Natural killer cell (primary cell): ENCODE measurements at regions of chr5 and their contacts with region 1.

Region 1: DNA sequence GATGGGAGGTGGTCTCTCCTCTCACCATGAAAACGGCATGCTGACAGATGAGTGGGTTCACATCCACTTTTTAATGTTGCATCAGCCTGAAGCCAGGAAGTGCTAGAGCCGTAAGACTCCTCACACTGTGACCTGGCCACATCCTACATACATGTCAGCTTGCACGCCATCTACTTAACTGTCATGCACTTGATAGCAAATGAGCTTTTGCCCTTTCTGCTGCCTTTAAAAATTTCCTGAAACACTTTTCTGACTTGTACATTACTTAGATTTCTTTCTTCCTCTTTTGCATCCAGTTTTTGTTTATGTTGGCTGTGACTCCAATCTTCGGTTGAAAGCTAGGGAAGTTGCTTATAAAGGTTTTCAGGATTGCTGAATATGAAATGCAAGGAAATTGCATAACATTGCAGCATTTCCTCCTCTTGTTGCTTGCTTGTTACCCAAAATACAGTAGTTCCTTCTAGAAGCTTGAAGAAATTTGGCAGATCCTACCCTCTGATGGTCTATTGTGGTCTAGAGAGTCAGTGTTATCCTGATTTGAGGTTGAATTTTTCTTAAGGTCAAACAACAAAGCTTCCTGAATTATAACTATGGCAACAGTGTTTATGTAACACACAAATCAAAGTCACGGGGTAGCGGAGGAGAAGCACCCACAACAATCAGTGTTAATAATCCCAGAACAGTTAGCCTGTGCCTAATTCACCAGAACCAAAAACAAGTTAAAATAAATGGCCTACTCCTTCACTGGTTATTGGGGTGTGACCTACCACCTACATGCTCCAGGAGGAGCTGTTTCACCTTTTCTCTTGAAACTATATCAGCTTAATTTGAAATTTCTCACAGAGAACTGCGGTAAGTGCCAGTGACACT is 232.5 kb downstream of the ARHGAP26 start:
- DNase-seq: peak; percentile 65 to 91
- ATAC-seq: peak; percentile 77 to 90 (median 83)
- H3K4me3 ChIP-seq: no peak overlapping the region
- H3K4me3 Mint-ChIP-seq: peak overlapping the region; percentile 91
- H3K27ac ChIP-seq: peak overlapping the region; percentile 85
- H3K27ac Mint-ChIP-seq: peak overlapping the region; percentile 96 to 100
- H3K4me1 ChIP-seq: peaks cover 74% of the 10 kb centered on the region
- H3K4me1 Mint-ChIP-seq: peaks cover 94% of the 10 kb centered on the region in 2 donors
- H3K27me3 ChIP-seq: no peaks in the 10 kb centered on the region
- H3K27me3 Mint-ChIP-seq: no peaks in the 10 kb centered on the region
- CTCF ChIP-seq: peak; percentile 69

Region 2: GRCh38 chr5:142215915-142216681 is 786.6 kb before region 1 on chr5:
- intact Hi-C with region 1: no loop called
- DNase-seq: no peak
- ATAC-seq: no peak
- H3K4me3 ChIP-seq: no peak overlapping the region
- H3K4me3 Mint-ChIP-seq: no peak overlapping the region
- H3K27ac ChIP-seq: no peak overlapping the region
- H3K27ac Mint-ChIP-seq: no peak overlapping the region
- H3K4me1 ChIP-seq: peaks cover 9% of the 10 kb centered on the region
- H3K4me1 Mint-ChIP-seq: peaks cover 0 to 8% of the 10 kb centered on the region in 2 donors
- H3K27me3 ChIP-seq: no peaks in the 10 kb centered on the region
- H3K27me3 Mint-ChIP-seq: peaks cover 0 to 6% of the 10 kb centered on the region in 2 donors
- CTCF ChIP-seq: no peak

Region 3: DNA sequence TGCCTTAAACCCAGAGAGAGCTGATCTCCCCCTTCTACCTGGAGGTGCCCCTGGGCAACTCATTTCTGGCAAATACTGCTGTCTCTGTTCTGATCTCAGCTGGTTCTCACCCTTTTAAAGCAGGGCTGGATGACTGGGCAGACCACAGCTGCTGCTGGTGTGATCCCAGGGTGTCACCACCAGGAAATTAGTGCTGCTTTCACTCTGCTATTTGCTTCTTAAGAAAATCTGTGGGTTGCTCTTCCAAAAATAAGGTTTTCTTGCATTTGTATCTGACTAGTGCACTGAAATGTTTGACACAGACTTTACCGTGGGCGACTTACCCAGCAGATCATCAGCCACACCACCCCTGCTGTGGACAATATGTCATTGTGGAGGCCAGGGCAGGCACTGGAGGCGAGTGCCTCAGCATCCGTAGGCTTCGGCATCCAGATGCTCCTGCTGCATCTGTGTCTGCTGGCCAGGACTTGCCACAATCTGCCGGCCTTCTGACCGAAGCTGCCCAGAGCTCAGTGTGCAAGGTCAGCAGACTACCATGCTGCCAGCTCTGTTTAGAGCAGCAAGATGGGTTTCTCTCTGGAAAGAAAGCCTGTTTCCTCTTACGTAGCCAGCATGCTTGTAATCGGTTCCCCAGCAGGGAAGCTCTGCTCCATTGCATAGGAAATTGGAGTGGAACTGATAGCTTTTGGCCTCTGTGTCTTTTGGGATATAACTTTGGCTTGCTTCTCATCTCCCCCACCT is 218.9 kb before region 1 on chr5:
- intact Hi-C with region 1: loop called (anchors 5 kb)
- DNase-seq: peak; percentile 55 to 70
- ATAC-seq: peak; percentile 67 to 82 (median 77)
- H3K4me3 ChIP-seq: peak overlapping the region; percentile 14
- H3K4me3 Mint-ChIP-seq: peak overlapping the region; percentile 69
- H3K27ac ChIP-seq: peak overlapping the region; percentile 62
- H3K27ac Mint-ChIP-seq: peak overlapping the region; percentile 91 to 94
- H3K4me1 ChIP-seq: peaks cover 72% of the 10 kb centered on the region
- H3K4me1 Mint-ChIP-seq: peaks cover 94 to 96% of the 10 kb centered on the region in 2 donors
- H3K27me3 ChIP-seq: no peaks in the 10 kb centered on the region
- H3K27me3 Mint-ChIP-seq: no peaks in the 10 kb centered on the region
- CTCF ChIP-seq: no peak

Region 4: DNA sequence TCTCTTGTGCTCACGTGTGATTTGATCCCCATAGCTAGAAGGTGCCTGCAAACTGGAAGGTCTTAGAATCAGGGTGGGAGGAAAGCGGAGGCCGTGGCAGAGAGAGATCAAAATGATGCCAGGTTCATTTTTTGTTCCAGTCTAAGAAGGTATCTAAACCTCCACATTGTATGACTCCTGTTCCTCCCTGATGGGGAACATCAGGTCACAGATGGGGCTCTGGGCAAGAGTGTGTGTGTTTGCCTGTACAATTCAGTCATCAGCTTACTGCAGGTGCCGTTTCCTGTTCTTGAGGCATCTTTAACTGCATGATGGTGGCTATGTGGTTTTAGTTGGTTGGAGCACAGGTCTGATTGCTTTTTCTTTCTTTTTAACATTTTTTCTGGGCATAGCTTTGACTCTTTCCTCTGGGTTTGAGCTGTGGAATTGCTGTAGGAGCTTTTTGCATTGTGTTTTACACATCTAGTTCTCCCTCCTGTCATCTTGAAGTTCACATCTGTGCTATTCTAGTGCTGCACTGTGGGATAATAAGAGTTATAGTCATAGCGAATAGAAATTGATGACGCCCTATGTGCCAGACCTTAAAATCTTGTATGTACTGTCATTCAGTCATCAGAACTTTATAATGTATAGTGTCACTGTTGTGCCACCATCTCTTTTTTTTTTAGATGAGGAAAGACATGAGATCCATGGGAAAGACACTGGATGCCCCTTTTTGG is 201.8 kb before region 1 on chr5:
- intact Hi-C with region 1: no loop called
- DNase-seq: peak; percentile 29 to 78
- ATAC-seq: peak; percentile 60 to 72 (median 61)
- H3K4me3 ChIP-seq: no peak overlapping the region
- H3K4me3 Mint-ChIP-seq: peak overlapping the region; percentile 77
- H3K27ac ChIP-seq: peak overlapping the region; percentile 61
- H3K27ac Mint-ChIP-seq: peak overlapping the region; percentile 83 to 90
- H3K4me1 ChIP-seq: peaks cover 49% of the 10 kb centered on the region
- H3K4me1 Mint-ChIP-seq: peaks cover 77 to 84% of the 10 kb centered on the region in 2 donors
- H3K27me3 ChIP-seq: no peaks in the 10 kb centered on the region
- H3K27me3 Mint-ChIP-seq: no peaks in the 10 kb centered on the region
- CTCF ChIP-seq: no peak

Region 5: DNA sequence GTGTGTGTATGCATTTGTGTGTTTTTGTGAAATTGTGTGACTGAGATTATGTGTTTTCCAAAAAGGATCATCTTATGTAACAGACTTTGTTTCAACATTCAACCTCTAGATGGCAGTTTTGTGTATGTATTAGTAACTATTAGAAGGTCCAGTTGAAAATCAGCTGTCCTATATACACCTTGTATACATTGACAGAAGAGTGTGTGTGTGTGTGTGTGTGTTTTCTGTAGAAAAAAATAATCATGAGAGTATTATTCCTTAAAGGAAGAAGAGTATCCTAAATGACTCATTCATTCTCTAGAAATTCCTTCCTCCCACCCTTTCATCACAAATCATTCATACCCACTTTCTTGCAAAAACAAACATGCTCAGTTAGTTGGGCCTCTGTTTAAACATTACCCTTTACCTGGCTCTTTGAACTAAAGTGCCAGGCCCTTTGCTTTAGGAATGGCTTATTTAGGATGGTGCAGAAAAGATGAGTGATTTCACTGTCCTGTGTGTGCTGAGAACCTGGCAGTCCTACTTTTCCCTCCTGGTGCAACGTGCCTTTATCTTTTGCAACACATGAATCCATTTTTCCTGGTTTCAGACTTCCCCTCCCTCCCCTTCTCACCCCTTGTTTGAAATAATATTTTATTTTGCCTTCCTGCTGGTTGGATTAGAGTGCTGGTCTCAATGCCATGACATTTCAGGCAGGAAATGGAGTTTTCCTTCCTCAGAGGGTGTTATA is 80.3 kb before region 1 on chr5:
- intact Hi-C with region 1: loop called (anchors 1 kb)
- DNase-seq: peak in 1 of 2 donors; percentile 60
- ATAC-seq: peak; percentile 52 to 66 (median 59)
- H3K4me3 ChIP-seq: no peak overlapping the region
- H3K4me3 Mint-ChIP-seq: no peak overlapping the region
- H3K27ac ChIP-seq: peak overlapping the region; percentile 0
- H3K27ac Mint-ChIP-seq: peak overlapping the region; percentile 86 to 98
- H3K4me1 ChIP-seq: peaks cover 28% of the 10 kb centered on the region
- H3K4me1 Mint-ChIP-seq: peaks cover 52 to 53% of the 10 kb centered on the region in 2 donors
- H3K27me3 ChIP-seq: no peaks in the 10 kb centered on the region
- H3K27me3 Mint-ChIP-seq: no peaks in the 10 kb centered on the region
- CTCF ChIP-seq: peak; percentile 49

Region 6: GRCh38 chr5:142977363-142978051 is 25.2 kb before region 1 on chr5:
- intact Hi-C with region 1: loop called (anchors 1 kb)
- DNase-seq: peak; percentile 63 to 87
- ATAC-seq: peak; percentile 83 to 96 (median 93)
- H3K4me3 ChIP-seq: no peak overlapping the region
- H3K4me3 Mint-ChIP-seq: peak overlapping the region; percentile 82
- H3K27ac ChIP-seq: peak overlapping the region; percentile 93
- H3K27ac Mint-ChIP-seq: peak overlapping the region; percentile 89 to 91
- H3K4me1 ChIP-seq: peaks cover 78% of the 10 kb centered on the region
- H3K4me1 Mint-ChIP-seq: peaks cover 97 to 98% of the 10 kb centered on the region in 2 donors
- H3K27me3 ChIP-seq: no peaks in the 10 kb centered on the region
- H3K27me3 Mint-ChIP-seq: no peaks in the 10 kb centered on the region
- CTCF ChIP-seq: no peak

Region 7: DNA sequence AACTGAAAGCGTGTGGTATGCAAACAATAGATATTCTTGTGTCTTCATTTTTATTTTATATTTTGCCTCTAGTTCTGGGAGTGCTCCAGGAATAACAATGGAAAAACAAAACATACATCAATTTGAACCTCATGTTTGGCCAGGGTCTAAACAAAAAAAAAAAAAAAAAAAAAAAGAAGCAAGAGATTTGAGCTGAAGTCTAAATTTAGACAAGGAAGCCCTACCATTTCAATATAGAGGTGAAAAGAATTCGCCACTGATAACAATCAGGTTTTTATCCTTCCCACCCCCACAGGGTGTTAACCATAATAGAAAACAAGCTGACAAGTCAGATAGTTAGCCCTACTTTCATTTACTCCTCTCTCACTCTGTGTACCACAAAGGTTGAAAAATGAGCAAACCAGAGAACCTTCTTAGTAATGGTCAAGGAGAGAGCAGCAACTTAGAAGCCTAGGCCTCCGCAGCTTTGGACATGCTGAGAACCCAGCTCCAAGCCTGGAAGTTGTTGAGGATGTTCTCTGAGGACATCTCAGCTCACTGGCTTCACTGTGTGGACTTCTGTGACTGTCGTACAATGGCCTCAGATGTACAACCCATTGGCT is 691.1 kb after region 1 on chr5:
- intact Hi-C with region 1: loop called (anchors 10 kb)
- DNase-seq: peak; percentile 16 to 61
- ATAC-seq: peak; percentile 87 to 94 (median 88)
- H3K4me3 ChIP-seq: no peak overlapping the region
- H3K4me3 Mint-ChIP-seq: peak overlapping the region; percentile 78
- H3K27ac ChIP-seq: peak overlapping the region; percentile 67
- H3K27ac Mint-ChIP-seq: peak overlapping the region; percentile 82 to 85
- H3K4me1 ChIP-seq: peaks cover 29% of the 10 kb centered on the region
- H3K4me1 Mint-ChIP-seq: peaks cover 47 to 73% of the 10 kb centered on the region in 2 donors
- H3K27me3 ChIP-seq: no peaks in the 10 kb centered on the region
- H3K27me3 Mint-ChIP-seq: peaks cover 0 to 7% of the 10 kb centered on the region in 2 donors
- CTCF ChIP-seq: no peak